Spleen (tissue), 13 donors: ENCODE measurements at regions of chr13 and their contacts with region 1.

Region 1: DNA sequence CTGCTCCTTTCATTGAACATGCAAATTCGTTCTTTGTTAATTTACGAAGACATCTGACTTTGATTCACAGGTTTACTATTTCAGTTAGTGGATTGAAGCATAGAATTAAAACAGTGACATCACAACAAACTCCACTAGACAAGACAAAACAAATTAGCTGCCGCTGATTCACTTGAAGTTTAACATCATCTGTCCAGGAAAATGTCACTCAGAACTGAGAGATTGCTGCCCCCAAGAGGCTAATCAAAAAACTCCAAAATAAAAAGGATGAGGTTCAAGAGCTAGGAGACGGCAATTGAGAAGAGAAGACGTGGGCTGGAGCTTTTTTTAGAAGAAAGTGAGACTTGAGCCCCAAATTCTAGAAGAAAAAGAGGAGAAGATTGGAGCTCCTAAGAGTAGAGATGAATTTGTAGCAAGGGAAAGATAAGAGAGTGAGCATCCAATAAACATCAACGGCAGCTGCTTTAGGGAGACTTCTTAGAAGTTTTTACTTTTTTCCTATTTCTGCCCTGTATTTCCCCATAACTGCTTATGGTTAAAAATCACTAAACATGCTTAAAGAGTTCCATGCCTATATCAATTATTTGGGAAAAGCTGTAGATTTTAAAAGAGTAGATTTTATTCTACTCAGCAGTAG is 40.8 kb upstream of the TPP2 start:
- DNase-seq: no peak
- H3K4me3 ChIP-seq: no peak overlapping the region
- H3K27ac ChIP-seq: no peak overlapping the region
- H3K4me1 ChIP-seq: no peaks in the 10 kb centered on the region
- H3K27me3 ChIP-seq: peaks cover 0 to 8% (median 0%) of the 10 kb centered on the region in 7 donors
- CTCF ChIP-seq: peak in 6 of 11 experiments; percentile 14 to 44 (median 36)
- POLR2A ChIP-seq: no peak

Region 2: DNA sequence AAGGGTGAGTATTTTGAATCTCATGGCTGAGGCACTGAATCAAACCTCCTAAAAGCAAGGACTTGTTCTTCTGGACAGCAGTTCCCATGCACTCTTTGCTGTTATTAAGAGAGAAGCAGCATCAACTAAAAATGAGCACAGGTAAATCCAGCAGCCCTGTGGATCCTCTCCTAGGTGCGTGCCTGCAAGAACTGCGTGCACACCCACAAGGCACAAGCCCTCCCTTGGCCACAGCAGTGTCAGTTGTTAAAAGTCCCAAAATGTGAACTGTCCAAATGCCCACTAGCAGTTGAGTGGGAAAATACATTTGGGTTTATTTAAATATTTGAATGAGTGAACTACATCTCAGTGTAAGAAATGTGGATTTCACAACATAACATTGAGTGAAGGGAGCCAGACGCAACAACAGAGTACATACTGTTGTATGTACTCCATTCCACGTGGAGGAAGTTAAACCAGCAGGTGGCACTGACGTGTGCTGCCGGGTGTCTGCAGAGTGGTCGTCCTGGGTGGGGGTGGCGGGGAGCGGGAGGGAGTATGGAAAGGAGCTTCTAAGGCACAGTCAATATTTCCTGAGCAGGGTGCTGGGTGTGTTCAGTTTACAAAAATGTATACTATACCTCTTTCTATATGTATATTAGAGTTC is 1406.2 kb before region 1 on chr13:
- intact Hi-C with region 1: loop called (anchors 10 kb)
- DNase-seq: no peak
- H3K4me3 ChIP-seq: no peak overlapping the region
- H3K27ac ChIP-seq: no peak overlapping the region
- H3K4me1 ChIP-seq: no peaks in the 10 kb centered on the region
- H3K27me3 ChIP-seq: peaks cover 0 to 69% (median 0%) of the 10 kb centered on the region in 7 donors
- CTCF ChIP-seq: no peak
- POLR2A ChIP-seq: no peak

Region 3: GRCh38 chr13:101433895-101434294 is 1122.1 kb before region 1 on chr13:
- intact Hi-C with region 1: no loop called
- DNase-seq: no peak
- H3K4me3 ChIP-seq: no peak overlapping the region
- H3K27ac ChIP-seq: no peak overlapping the region
- H3K4me1 ChIP-seq: no peaks in the 10 kb centered on the region
- H3K27me3 ChIP-seq: peaks cover 0 to 4% (median 0%) of the 10 kb centered on the region in 7 donors
- CTCF ChIP-seq: no peak
- POLR2A ChIP-seq: no peak

Region 4: DNA sequence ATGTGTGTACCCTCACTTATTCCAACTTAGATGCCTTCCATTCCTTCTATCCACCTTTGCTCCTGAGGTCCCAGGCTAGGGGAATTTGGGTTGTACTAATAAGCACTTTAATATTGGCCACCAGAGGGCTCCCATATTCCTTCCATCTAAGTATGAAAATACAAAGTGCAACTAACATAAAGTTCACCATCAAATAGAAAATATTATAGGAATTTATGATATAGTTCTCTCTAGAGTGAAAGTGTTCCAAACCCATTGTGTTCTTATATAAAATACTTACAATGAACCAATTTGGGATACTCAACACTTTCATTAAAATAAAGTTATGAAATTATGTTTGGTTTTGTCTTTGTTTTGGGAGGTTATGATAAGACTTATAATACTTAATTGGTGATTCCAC is 1041.2 kb before region 1 on chr13:
- intact Hi-C with region 1: loop called (anchors 10 kb)
- DNase-seq: no peak
- H3K4me3 ChIP-seq: no peak overlapping the region
- H3K27ac ChIP-seq: no peak overlapping the region
- H3K4me1 ChIP-seq: no peaks in the 10 kb centered on the region
- H3K27me3 ChIP-seq: no peaks in the 10 kb centered on the region
- CTCF ChIP-seq: peak in 9 of 11 experiments; percentile 34 to 66 (median 52)
- POLR2A ChIP-seq: no peak

Region 5: DNA sequence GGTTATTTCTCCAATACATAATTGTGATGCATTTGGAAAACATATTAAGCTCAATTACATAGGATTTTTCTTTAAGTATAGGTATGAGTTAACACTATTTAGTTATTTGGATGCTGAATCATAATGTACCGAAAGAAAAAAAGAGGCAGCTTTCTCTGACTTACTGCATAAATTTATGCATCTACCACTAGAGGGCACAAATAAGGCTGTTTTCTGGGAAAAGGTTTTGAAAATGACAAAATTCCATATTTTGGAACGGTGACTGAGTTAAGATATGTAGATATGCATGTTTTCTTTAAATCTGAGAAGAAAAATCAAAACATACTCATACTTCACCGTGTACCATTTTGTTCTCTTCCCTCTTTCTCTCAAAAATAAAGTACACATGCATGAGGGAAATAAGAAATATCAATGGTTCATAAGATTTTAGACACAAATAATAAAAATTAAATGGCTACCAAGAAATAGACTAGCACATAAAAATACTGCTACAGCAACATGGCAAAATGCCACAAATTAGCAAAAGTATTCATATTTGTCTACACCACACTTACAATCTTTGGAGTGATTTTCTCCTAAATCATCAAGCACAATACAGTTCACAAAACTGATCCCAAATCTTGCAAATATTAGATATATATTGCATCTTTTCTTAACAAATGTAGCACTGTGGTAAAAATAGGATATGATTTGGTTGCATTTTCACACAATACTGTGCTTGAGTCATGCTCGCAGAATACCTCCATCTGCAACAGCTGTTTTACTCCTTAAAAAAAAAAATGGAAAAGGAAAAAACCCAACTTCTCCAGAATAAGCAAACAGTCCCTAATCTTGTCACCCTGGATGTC is 414.2 kb before region 1 on chr13:
- intact Hi-C with region 1: loop called (anchors 10 kb)
- DNase-seq: no peak
- H3K4me3 ChIP-seq: no peak overlapping the region
- H3K27ac ChIP-seq: no peak overlapping the region
- H3K4me1 ChIP-seq: no peaks in the 10 kb centered on the region
- H3K27me3 ChIP-seq: no peaks in the 10 kb centered on the region
- CTCF ChIP-seq: peak in 10 of 11 experiments; percentile 9 to 60 (median 44)
- POLR2A ChIP-seq: no peak